Activated CD4-positive, alpha-beta T cell treated with anti-CD3 and anti-CD28 coated beads for 36 hours (primary cell): ENCODE measurements at regions of chr9 and their contacts with region 1.

Region 1: DNA sequence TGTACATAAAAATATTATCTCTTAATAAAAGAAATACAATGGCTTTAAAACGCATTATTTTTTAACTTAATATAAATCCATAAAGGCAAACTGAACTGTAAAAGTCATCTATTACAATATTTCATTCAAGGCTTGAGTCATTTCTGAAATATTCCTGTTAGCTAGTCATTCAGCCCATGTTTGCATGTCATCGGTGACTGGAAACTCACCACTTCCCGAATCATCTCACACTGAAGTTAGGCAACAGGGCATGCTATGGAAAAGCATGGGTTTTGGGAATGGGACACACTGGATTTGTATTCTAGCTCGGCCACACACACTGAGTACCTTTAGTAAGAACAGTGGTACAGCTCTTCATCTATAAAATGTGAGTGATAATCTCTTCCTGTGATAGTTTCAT is 691.1 kb upstream of the C9orf72 start:
- DNase-seq: no peak
- ATAC-seq: no peak
- H3K4me3 Mint-ChIP-seq: no peak overlapping the region
- H3K27ac Mint-ChIP-seq: no peak overlapping the region
- H3K4me1 Mint-ChIP-seq: no peaks in the 10 kb centered on the region
- H3K27me3 Mint-ChIP-seq: no peaks in the 10 kb centered on the region

Region 2: DNA sequence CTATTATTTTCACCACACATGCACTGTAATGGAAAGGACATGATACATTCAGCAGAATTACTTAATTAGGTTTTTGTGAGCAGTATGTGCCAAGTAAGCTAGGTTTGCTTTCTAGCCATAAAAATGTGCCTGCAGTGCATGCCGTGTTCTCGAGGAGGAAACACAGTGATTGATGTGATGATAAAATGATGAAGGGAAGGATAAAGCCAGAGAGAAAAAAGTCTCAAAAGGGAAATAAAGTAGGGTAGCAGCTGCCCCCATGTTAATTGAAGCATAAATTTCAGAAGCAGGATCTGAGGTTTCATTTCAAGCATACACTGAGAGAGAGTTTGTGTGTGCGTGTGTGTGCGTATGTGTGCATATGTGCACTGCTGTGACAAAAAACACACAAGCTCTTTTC is 23.1 kb after region 1 on chr9:
- CTCF ChIA-PET with region 1: no interaction called
- POLR2A ChIA-PET with region 1: no interaction called
- intact Hi-C with region 1: loop called in 1 of 2 experiments (anchors 2 kb)
- DNase-seq: no peak
- ATAC-seq: no peak
- H3K4me3 Mint-ChIP-seq: no peak overlapping the region
- H3K27ac Mint-ChIP-seq: no peak overlapping the region
- H3K4me1 Mint-ChIP-seq: no peaks in the 10 kb centered on the region
- H3K27me3 Mint-ChIP-seq: no peaks in the 10 kb centered on the region